ENCODE measurements at regions of chr15 and their contacts with region 1.

Region 1: DNA sequence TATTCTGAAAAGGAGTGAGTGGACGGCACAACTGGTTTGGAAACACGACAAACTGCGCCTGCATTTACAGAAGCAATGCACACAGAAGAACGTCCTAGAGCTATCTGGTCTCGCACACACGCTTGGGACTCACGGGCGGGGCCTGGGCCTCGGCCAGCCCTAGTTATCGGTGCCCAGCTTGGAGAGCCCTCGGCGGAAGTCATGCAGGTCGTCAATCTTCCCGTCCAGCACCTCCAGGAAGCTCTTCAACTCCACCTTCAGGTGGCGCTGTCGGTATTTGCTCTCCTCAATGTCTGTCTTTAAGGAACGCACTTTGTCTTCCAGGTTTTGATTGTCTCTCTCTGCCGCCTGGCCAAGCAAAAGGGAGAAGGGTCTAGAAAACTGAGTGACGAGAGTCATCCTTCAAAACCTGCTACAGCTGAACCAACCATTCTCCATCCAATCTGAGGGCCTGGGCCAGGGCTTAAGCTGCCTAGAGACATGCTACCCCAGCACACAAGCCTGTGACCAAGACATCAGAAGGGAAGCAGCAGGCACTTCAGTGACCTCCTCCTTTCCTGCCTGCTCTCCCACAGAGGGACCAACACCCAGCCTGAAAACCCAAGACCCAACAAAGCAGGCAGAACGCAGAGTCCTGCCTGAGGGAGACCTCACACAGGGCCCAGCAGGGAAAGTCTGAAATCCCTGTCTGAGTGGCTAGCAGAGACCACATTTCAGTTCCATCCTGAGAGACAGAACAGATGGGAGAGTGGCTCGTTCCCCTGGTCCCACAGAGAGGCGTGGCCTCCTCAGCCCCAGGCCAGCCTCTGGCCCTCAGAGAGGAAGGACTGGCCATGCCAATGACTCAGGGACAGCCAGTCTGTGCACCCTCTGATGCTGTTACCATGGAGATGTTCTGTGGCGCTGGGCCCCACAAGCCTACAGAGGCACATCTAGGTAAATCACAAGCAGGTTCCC is 40.4 kb downstream of the WHAMM start:
- DNase-seq: peak; percentile 89
- H3K4me3 ChIP-seq: no peak overlapping the region; a peak in 1 of 4 replicates
- H3K27ac ChIP-seq: peak overlapping the region in 1 of 2 experiments; percentile 90; a peak in 2 of 4 replicates
- H3K4me1 ChIP-seq: peaks cover 4 to 22% of the 10 kb centered on the region in 2 experiments; a peak in 3 of 4 replicates
- H3K27me3 ChIP-seq: no peaks in the 10 kb centered on the region
- CTCF ChIP-seq: peak; percentile 53
- EP300 ChIP-seq: no peak; a peak in 1 of 4 replicates
- RAD21 ChIP-seq: peak; percentile 72

Region 2: GRCh38 chr15:82838096-82838735 is 11.6 kb before region 1 on chr15:
- CTCF ChIA-PET with region 1: interaction called, 10 read pairs
- POLR2A ChIA-PET with region 1: no interaction called
- DNase-seq: no peak
- H3K4me3 ChIP-seq: no peak overlapping the region
- H3K27ac ChIP-seq: no peak overlapping the region
- H3K4me1 ChIP-seq: peaks cover 0 to 1% of the 10 kb centered on the region in 2 experiments; a peak in 1 of 4 replicates
- H3K27me3 ChIP-seq: no peaks in the 10 kb centered on the region
- CTCF ChIP-seq: no peak
- EP300 ChIP-seq: no peak
- RAD21 ChIP-seq: no peak

Region 3: DNA sequence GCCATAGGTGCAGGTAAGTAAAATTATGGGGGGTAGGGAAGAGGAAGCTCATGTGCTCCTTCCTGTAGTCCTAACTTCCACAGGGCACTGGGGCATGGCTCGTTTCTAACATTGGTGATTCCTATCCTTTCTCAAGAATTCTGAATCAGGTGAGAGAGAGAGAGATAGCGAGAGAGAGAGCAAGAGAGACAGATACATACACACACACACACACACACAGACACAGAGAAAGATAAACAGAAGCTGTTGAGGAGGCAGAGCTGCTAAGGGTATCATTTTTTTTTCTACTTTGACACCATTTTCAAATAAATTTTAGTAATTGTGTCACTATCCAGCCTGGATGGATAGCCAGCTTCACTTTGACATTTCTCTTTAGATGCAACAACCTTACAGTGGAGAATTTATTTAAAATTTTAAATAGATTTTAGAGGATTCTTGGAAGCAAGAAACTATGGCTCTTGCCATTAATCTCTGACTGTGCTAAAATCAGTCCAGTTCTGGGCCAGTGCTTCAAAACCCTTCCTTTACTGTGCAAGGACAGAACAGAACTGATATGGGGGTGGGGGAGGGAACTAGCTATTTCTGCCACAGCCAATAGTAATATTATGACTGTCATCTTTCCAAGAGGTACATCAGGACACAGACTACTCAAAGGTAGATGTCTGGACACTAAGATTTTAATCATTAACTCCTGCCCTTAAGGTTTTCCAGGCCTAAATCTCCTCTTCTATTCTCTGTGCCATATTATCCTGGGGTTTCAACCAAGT is 121.6 kb after region 1 on chr15:
- CTCF ChIA-PET with region 1: interaction called, 11 read pairs
- POLR2A ChIA-PET with region 1: no interaction called
- DNase-seq: no peak
- H3K4me3 ChIP-seq: no peak overlapping the region
- H3K27ac ChIP-seq: peak overlapping the region in 1 of 2 experiments; percentile 71; a peak in 2 of 4 replicates
- H3K4me1 ChIP-seq: peaks cover 0 to 13% of the 10 kb centered on the region in 2 experiments; a peak in 2 of 4 replicates
- H3K27me3 ChIP-seq: no peaks in the 10 kb centered on the region
- CTCF ChIP-seq: no peak
- EP300 ChIP-seq: no peak
- RAD21 ChIP-seq: no peak

Region 4: GRCh38 chr15:82985688-82986441 is 136.0 kb after region 1 on chr15 and contains the start of gene RAMAC:
- CTCF ChIA-PET with region 1: interaction called, 18 read pairs
- POLR2A ChIA-PET with region 1: no interaction called
- DNase-seq: peak; percentile 87
- H3K4me3 ChIP-seq: peak within 1 kb of the TSS; percentile 88 to 92
- H3K27ac ChIP-seq: peak within 1 kb of the TSS; percentile 69 to 94
- H3K4me1 ChIP-seq: peaks cover 8 to 10% of the 10 kb centered on the region in 2 experiments; a peak in 3 of 4 replicates
- H3K27me3 ChIP-seq: no peaks in the 10 kb centered on the region
- CTCF ChIP-seq: no peak
- EP300 ChIP-seq: 0 out of 4 replicates have a peak, but pooled peaks of 1 of the 2 experiments have one; percentile 22
- RAD21 ChIP-seq: 0 out of 2 replicates have a peak, but pooled peaks have one; percentile 4
- polyA plus RNA-seq, gene RAMAC: 25.9 and 33.3 TPM in 2 replicates